ENCODE measurements at regions of chr15 and their contacts with region 1.

Region 1: DNA sequence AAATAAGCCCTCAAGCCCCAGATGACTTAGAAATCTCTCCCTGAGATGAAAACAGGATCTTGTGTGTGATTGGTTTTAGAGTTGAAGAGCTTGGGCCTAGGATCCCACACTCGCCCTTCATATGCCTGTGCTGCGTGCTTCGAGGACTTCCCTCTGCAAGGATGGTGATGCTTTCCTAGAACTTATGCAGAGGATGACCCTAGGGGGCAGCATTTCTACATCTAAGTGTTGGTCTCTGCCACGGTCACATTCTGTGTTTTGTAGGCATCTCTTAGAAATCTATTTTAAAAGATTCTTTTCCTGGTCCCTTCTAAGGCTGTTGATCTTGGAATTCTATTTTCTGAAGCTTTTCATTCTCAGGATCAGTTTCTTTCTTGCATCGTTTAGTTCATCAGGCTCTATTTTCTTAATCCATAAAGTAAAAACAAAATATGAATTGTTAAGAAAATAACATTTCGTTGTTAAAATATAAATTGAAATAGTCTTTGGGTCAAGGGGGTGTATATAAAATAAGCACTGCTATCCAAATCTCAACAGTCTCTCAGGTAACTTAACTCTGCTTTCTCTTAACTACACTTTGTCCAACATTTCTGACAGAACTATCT is 45.7 kb downstream of the WDR76 start:
- DNase-seq: peak; percentile 15
- H3K4me3 ChIP-seq: no peak overlapping the region
- H3K27me3 ChIP-seq: no peaks in the 10 kb centered on the region
- CTCF ChIP-seq: peak; percentile 73

Region 2: GRCh38 chr15:43859546-43859945 is 13.0 kb before region 1 on chr15:
- CTCF ChIA-PET with region 1: interaction called, 12 read pairs
- POLR2A ChIA-PET with region 1: no interaction called
- DNase-seq: no peak
- H3K4me3 ChIP-seq: no peak overlapping the region
- H3K27me3 ChIP-seq: no peaks in the 10 kb centered on the region
- CTCF ChIP-seq: no peak

Region 3: DNA sequence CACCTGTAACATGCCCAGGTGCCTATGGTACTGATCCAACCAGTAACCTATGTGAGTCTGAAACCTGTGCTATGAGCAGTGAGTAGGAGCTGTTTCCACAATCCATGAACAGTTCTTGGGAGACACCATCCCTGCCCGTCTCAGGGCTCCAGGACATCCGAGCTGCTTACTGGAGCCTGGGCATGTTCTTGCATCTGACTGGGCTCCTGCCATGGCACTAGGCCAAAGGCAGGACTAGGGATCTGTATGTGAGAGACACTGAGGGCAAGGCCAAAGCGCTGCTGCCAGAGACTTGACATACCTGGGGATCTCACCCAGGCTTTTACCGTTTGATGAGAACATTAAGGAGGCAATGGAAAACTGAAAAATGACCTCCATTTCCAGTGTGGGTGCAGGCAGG is 14.0 kb after region 1 on chr15:
- CTCF ChIA-PET with region 1: interaction called, 11 read pairs
- POLR2A ChIA-PET with region 1: no interaction called
- DNase-seq: no peak
- H3K4me3 ChIP-seq: no peak overlapping the region
- H3K27me3 ChIP-seq: no peaks in the 10 kb centered on the region
- CTCF ChIP-seq: no peak

Region 4: GRCh38 chr15:43977072-43977884 is 104.8 kb after region 1 on chr15:
- CTCF ChIA-PET with region 1: no interaction called
- POLR2A ChIA-PET with region 1: no interaction called
- DNase-seq: no peak
- H3K4me3 ChIP-seq: no peak overlapping the region
- H3K27me3 ChIP-seq: no peaks in the 10 kb centered on the region
- CTCF ChIP-seq: no peak

Region 5: DNA sequence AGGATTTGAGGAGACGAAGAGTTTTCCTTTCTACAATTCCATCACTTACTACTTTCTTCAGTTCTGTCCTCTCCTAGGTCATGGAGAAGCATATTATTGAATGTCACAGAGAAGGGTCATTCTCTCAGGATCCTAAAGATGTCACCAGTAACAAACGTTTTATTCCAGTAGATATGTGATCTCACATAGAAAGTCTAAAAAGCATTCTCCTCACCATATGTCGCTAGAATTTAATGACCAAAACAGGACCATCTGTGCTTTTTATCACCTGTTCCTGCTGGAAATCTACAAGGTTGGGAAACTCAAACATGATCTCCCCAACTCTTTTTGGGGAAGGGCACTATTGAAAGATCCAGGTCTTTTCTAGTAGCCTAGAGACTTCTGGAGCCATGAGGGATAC is 346.6 kb after region 1 on chr15:
- CTCF ChIA-PET with region 1: interaction called, 20 read pairs
- POLR2A ChIA-PET with region 1: no interaction called
- DNase-seq: no peak
- H3K4me3 ChIP-seq: no peak overlapping the region
- H3K27me3 ChIP-seq: no peaks in the 10 kb centered on the region
- CTCF ChIP-seq: no peak

Measured in BJ (cell line).